Tibial artery (tissue), 4 donors: ENCODE measurements at regions of chr2 and their contacts with region 1.

Region 1: DNA sequence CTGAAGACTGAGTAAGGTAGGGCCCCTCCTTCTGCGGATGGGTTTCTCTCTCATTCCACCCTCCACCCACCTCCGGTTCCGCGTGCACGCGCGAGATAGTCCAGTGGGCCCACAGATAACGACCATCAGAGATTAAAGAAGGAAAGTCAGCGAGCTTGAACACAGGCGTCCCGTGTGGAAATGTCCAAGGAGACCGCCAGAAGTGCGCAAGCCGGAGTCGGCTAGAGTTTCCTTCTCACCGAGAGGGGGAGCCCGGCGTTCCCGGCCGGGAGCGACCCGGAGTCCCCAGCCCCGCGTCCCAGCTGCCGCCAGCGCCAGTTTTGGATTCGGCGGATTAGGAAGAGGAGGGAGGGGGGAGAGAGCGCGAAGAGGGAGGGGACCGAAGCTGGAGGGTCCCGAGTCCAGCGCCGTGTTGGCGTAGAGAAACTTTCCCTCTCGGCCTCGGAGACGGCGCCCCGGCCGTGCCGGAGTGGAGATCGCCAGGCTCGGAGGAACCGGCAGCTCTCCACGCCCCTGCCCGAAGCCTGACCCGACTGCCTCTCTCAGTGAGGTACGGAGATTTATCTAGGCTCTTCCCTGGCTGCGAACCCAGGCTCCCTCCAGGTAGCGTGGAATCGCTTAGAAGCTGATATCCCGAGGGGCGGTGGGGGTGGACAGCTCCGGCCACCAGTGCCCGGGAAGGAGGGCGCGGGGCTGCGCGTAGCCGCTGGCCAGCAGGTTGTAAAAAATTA is at the start of gene GULP1:
- DNase-seq: peak; percentile 71 to 87
- H3K4me3 ChIP-seq: peak within 1 kb of the TSS; percentile 74 to 83
- H3K27ac ChIP-seq: peak within 1 kb of the TSS; percentile 95 to 97
- H3K4me1 ChIP-seq: peaks cover 0 to 38% (median 13%) of the 10 kb centered on the region in 4 donors
- H3K27me3 ChIP-seq: no peaks in the 10 kb centered on the region
- CTCF ChIP-seq: peak; percentile 55 to 64

Region 2: GRCh38 chr2:188506843-188507242 is 215.1 kb after region 1 on chr2:
- intact Hi-C with region 1: loop called (anchors 10 kb)
- DNase-seq: no peak
- H3K4me3 ChIP-seq: no peak overlapping the region
- H3K27ac ChIP-seq: no peak overlapping the region
- H3K4me1 ChIP-seq: peaks cover 0 to 22% (median under 1%) of the 10 kb centered on the region in 4 donors
- H3K27me3 ChIP-seq: no peaks in the 10 kb centered on the region
- CTCF ChIP-seq: no peak